HEK293 (cell line): ENCODE measurements at regions of chr9 and their contacts with region 1.

Region 1: GRCh38 chr9:15317836-15318235 is 10.8 kb upstream of the TTC39B start:
- H3K4me3 ChIP-seq: no peak overlapping the region
- H3K27ac ChIP-seq: no peak overlapping the region
- H3K4me1 ChIP-seq: no peaks in the 10 kb centered on the region
- CTCF ChIP-seq: no peak

Region 2: GRCh38 chr9:15295761-15296405 is 22.0 kb before region 1 on chr9:
- CTCF ChIA-PET with region 1: no interaction called
- POLR2A ChIA-PET with region 1: no interaction called
- H3K4me3 ChIP-seq: peak overlapping the region; percentile 13; the same call in 1 of the 2 replicates
- H3K27ac ChIP-seq: no peak overlapping the region
- H3K4me1 ChIP-seq: no peaks in the 10 kb centered on the region
- CTCF ChIP-seq: no peak

Region 3: GRCh38 chr9:15306757-15307534 is 10.9 kb before region 1 on chr9 and contains the start of gene TTC39B:
- CTCF ChIA-PET with region 1: no interaction called
- POLR2A ChIA-PET with region 1: interaction called, 10 read pairs
- H3K4me3 ChIP-seq: peak within 1 kb of the TSS; percentile 84
- H3K27ac ChIP-seq: peak within 1 kb of the TSS; percentile 65; the same call in 1 of the 2 replicates
- H3K4me1 ChIP-seq: no peaks in the 10 kb centered on the region
- CTCF ChIP-seq: peak; percentile 23; the same call in 1 of the 2 replicates

Region 4: GRCh38 chr9:15333376-15333881 is 15.6 kb after region 1 on chr9:
- CTCF ChIA-PET with region 1: no interaction called
- POLR2A ChIA-PET with region 1: no interaction called
- H3K4me3 ChIP-seq: no peak overlapping the region
- H3K27ac ChIP-seq: no peak overlapping the region
- H3K4me1 ChIP-seq: no peaks in the 10 kb centered on the region
- CTCF ChIP-seq: no peak

Region 5: GRCh38 chr9:15501179-15501578 is 183.3 kb after region 1 on chr9:
- CTCF ChIA-PET with region 1: no interaction called
- POLR2A ChIA-PET with region 1: no interaction called
- H3K4me3 ChIP-seq: no peak overlapping the region
- H3K27ac ChIP-seq: no peak overlapping the region
- H3K4me1 ChIP-seq: peaks cover 9% of the 10 kb centered on the region
- CTCF ChIP-seq: no peak